IMR-90 (cell line): ENCODE measurements at regions of chr1 and their contacts with region 1.

Region 1: GRCh38 chr1:55519937-55520683 is 304.9 kb upstream of the USP24 start:
- DNase-seq: peak; percentile 73
- ATAC-seq: peak; percentile 86
- H3K4me3 ChIP-seq: no peak overlapping the region
- H3K27ac ChIP-seq: peak overlapping the region; percentile 97
- H3K4me1 ChIP-seq: peaks cover 21% of the 10 kb centered on the region
- H3K27me3 ChIP-seq: no peaks in the 10 kb centered on the region
- CTCF ChIP-seq: no peak
- POLR2A ChIP-seq: no peak
- RAD21 ChIP-seq: no peak

Region 2: DNA sequence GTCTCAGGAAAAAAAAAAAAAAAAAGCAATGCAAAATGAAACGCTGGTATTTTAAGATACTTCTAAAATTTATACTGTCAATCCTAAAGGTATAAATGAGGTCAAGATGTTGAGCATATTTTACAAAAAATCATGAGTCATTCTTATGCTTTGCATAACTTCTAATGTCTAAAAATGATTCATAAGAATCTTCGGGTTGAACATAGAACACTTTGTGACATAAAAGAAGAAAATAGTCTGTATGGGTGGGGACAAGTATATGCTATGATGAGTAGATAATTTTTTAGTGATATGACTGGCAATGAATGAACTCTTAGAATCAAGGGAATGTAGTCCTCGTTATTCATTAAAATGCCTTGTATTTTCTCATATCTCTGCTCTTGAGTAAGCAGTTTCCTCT is 111.9 kb after region 1 on chr1:
- CTCF ChIA-PET with region 1: no interaction called
- POLR2A ChIA-PET with region 1: no interaction called
- dilution Hi-C with region 1: no loop called
- in situ Hi-C with region 1: no loop called
- intact Hi-C with region 1: loop called (anchors 10 kb)
- DNase-seq: peak; percentile 63
- ATAC-seq: peak; percentile 45
- H3K4me3 ChIP-seq: no peak overlapping the region
- H3K27ac ChIP-seq: peak overlapping the region; percentile 62; the same call in 1 of the 2 replicates
- H3K4me1 ChIP-seq: peaks cover 15% of the 10 kb centered on the region
- H3K27me3 ChIP-seq: no peaks in the 10 kb centered on the region
- CTCF ChIP-seq: no peak
- POLR2A ChIP-seq: no peak
- RAD21 ChIP-seq: no peak